HCT116 (cell line): ENCODE measurements at regions of chr18 and their contacts with region 1.

Region 1: GRCh38 chr18:31424383-31424988 is 23.1 kb upstream of the DSG3 start:
- DNase-seq: peak; percentile 64
- ATAC-seq: peak; percentile 83
- H3K4me3 ChIP-seq: no peak overlapping the region
- H3K27ac ChIP-seq: no peak overlapping the region
- H3K4me1 ChIP-seq: peaks cover 0 to 26% of the 10 kb centered on the region in 2 experiments; a peak in 3 of 4 replicates
- H3K27me3 ChIP-seq: no peaks in the 10 kb centered on the region
- CTCF ChIP-seq: peak; percentile 79 to 96 (median 93)
- POLR2A ChIP-seq: no peak
- RAD21 ChIP-seq: peak; percentile 94

Region 2: DNA sequence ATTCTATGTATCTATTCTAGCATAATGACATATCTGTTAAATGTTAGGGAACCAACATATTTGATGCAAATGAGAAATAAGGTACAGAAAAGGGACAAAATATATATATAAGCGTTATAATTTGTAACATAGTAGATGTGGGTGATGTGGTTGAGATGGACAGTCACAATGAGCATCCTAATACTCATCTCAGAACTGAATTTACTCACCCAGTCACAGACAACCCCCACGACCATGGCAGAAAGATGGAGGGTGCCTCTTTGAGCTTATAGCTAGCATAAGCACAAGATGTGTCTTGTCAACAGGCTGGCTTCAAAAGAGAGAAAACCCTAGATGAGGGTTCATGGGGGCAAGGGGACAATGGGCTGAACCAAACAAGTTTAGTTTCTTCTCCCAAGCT is 13.9 kb after region 1 on chr18:
- CTCF ChIA-PET with region 1: interaction called, 10 read pairs
- POLR2A ChIA-PET with region 1: no interaction called
- RAD21 ChIA-PET with region 1: no interaction called
- intact Hi-C with region 1: no loop called
- DNase-seq: no peak
- ATAC-seq: no peak
- H3K4me3 ChIP-seq: no peak overlapping the region
- H3K27ac ChIP-seq: no peak overlapping the region
- H3K4me1 ChIP-seq: peaks cover 0 to 5% of the 10 kb centered on the region in 2 experiments; a peak in 1 of 4 replicates
- H3K27me3 ChIP-seq: no peaks in the 10 kb centered on the region
- CTCF ChIP-seq: no peak
- POLR2A ChIP-seq: no peak
- RAD21 ChIP-seq: no peak

Region 3: GRCh38 chr18:31555971-31556747 is 131.7 kb after region 1 on chr18:
- CTCF ChIA-PET with region 1: interaction called, 8 read pairs
- POLR2A ChIA-PET with region 1: no interaction called
- RAD21 ChIA-PET with region 1: no interaction called
- intact Hi-C with region 1: loop called (anchors 2 kb)
- DNase-seq: peak; percentile 71
- ATAC-seq: peak; percentile 75
- H3K4me3 ChIP-seq: no peak overlapping the region
- H3K27ac ChIP-seq: no peak overlapping the region
- H3K4me1 ChIP-seq: no peaks in the 10 kb centered on the region; a peak in 1 of 4 replicates
- H3K27me3 ChIP-seq: no peaks in the 10 kb centered on the region
- CTCF ChIP-seq: peak; percentile 68 to 88 (median 86)
- POLR2A ChIP-seq: no peak
- RAD21 ChIP-seq: peak; percentile 90

Region 4: DNA sequence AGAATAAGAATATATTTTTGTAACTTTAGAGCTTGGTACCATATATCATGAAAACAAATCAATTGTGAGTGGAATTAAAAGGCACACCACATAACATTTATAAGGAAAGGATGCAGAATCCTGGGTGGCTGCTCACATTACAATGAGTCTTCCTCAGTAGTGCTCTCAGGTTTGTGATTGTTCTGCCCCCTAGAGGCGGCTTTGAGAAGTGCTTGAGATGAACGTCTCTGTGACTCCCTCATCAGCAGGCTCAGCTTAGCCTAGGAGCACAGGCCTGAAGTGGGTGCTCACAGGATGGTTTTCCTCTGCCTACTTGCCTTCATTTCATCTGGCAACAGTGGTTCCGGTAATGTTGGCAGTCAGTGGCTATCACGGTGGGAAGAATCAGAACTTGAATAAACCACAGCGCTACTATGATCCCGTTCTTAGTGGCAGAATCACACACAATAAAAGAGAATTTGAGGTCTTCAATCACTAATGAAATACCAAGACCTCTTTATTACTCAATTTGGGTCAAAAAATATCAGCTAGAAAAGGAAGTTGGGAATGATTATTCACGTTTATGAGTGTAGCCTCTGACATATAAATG is 298.0 kb after region 1 on chr18:
- CTCF ChIA-PET with region 1: interaction called, 3 read pairs
- POLR2A ChIA-PET with region 1: no interaction called
- RAD21 ChIA-PET with region 1: no interaction called
- intact Hi-C with region 1: loop called (anchors 10 kb)
- DNase-seq: peak; percentile 66
- ATAC-seq: peak; percentile 100
- H3K4me3 ChIP-seq: no peak overlapping the region
- H3K27ac ChIP-seq: no peak overlapping the region
- H3K4me1 ChIP-seq: no peaks in the 10 kb centered on the region
- H3K27me3 ChIP-seq: no peaks in the 10 kb centered on the region
- CTCF ChIP-seq: peak; percentile 68 to 91 (median 89); a peak in 5 of 6 replicates
- POLR2A ChIP-seq: no peak
- RAD21 ChIP-seq: peak; percentile 82